ENCODE measurements at regions of chr1 and their contacts with region 1.

Region 1: GRCh38 chr1:46303038-46303871 is at the starts of genes LRRC41 and UQCRH:
- DNase-seq: peak; percentile 97 to 98
- H3K4me3 ChIP-seq: peak within 1 kb of the TSS; percentile 75 to 82
- H3K27ac ChIP-seq: peak within 1 kb of the TSS; percentile 98
- H3K4me1 ChIP-seq: peaks cover 71% of the 10 kb centered on the region
- H3K27me3 ChIP-seq: no peaks in the 10 kb centered on the region
- CTCF ChIP-seq: no peak
- POLR2A ChIP-seq: peak in 1 of 2 donors; percentile 73
- total RNA-seq, gene LRRC41: 58.4 TPM
- total RNA-seq, gene UQCRH: 175 TPM

Region 2: GRCh38 chr1:46070164-46070814 is 233.0 kb before region 1 on chr1:
- intact Hi-C with region 1: no loop called
- DNase-seq: no peak
- H3K4me3 ChIP-seq: no peak overlapping the region
- H3K27ac ChIP-seq: no peak overlapping the region
- H3K4me1 ChIP-seq: no peaks in the 10 kb centered on the region
- H3K27me3 ChIP-seq: no peaks in the 10 kb centered on the region
- CTCF ChIP-seq: no peak
- POLR2A ChIP-seq: no peak

Region 3: GRCh38 chr1:46274223-46275029 is 28.8 kb before region 1 on chr1:
- intact Hi-C with region 1: no loop called
- DNase-seq: no peak
- H3K4me3 ChIP-seq: no peak overlapping the region
- H3K27ac ChIP-seq: no peak overlapping the region
- H3K4me1 ChIP-seq: no peaks in the 10 kb centered on the region
- H3K27me3 ChIP-seq: no peaks in the 10 kb centered on the region
- CTCF ChIP-seq: no peak
- POLR2A ChIP-seq: no peak

Region 4: DNA sequence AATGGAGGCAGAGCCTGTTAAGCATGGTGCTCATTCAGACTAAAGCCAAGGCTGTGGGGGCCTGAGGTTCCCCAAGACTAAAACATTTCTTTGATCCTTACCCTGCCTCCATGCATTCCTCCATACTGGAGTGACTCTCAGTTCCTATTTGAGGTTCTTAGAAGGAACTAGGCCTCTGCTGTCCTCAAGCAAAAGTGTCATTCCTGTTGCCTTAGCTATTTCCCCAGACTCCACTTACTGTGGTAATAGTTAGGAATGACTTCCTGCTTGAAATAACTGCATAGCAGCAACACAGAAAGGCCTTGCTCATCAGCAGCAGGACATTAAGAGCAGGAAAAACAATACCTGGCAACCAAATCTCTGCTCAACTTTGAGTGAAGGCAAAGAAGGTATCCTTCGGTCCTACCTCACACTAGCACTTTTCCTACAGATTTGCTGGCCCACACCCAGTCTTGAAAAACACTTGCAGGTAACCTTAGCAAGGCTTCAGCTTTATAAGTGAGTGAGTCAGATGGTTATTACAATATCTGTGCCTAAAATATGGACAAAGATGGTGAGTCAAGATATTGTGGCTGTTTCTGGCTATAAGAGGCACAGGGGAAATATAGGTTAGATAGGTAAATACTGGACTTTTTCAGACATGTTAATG is 14.6 kb before region 1 on chr1:
- intact Hi-C with region 1: no loop called
- DNase-seq: no peak
- H3K4me3 ChIP-seq: no peak overlapping the region
- H3K27ac ChIP-seq: no peak overlapping the region
- H3K4me1 ChIP-seq: no peaks in the 10 kb centered on the region
- H3K27me3 ChIP-seq: no peaks in the 10 kb centered on the region
- CTCF ChIP-seq: no peak
- POLR2A ChIP-seq: no peak

Region 5: GRCh38 chr1:46340404-46341221 is 37.4 kb after region 1 on chr1 and contains the start of gene NSUN4:
- intact Hi-C with region 1: loop called (anchors 2 kb)
- DNase-seq: peak in 1 of 2 donors; percentile 97
- H3K4me3 ChIP-seq: peak within 1 kb of the TSS; percentile 56 to 68
- H3K27ac ChIP-seq: peak within 1 kb of the TSS; percentile 95
- H3K4me1 ChIP-seq: peaks cover 8% of the 10 kb centered on the region
- H3K27me3 ChIP-seq: no peaks in the 10 kb centered on the region
- CTCF ChIP-seq: peak in 2 of 3 experiments; percentile 34 to 53
- POLR2A ChIP-seq: peak in 1 of 2 donors; percentile 50
- total RNA-seq, gene NSUN4: 21.4 TPM

Measured in vagina (tissue), 2 donors.